Activated CD4-positive, alpha-beta T cell treated with anti-CD3 and anti-CD28 coated beads, Interleukin-2, amount 10 ng/mL, durations not matched to agents 7 days and 5 days (primary cell): ENCODE measurements at regions of chr4 and their contacts with region 1.

Region 1: DNA sequence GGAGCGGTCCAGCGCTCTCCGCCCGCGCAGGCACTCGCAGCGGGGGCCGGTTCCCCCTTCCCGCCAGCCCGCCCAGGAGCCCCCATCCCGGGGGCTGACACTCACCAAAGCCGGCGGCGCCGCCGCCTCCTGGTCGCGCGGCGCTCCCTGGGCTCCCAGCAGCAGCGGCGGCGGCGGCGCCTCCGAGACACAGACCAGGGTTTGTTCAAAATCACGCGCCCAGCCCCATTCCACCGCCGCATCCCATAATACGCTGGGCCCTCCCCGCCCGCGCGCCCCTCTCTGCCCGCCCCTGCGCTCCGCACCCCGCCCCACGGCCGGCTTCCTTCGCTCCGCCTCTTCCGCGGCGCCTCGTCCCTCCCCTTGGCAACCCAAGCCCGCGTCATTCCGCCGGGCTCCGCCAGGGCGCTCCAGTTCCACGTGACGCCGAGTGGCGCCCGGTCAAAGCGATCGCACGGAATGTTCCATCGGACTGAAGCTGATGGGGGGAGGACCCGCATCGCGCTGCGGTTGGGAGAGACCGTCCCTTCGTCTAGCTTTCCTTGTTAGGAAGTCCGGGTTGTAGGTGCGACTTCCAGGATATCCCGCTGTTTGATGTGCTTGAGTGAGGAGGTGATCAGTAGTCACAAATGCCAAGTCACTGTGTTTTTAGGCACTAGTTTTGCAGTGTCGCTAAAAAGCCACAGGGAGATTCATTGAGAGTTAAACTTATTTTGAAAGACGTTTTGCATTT is 2.2 kb upstream of the LIN54 start:
- DNase-seq: peak; percentile 96
- H3K4me3 Mint-ChIP-seq: peak overlapping the region; percentile 89
- H3K27ac Mint-ChIP-seq: peak overlapping the region; percentile 96
- H3K4me1 Mint-ChIP-seq: peaks cover 35% of the 10 kb centered on the region
- H3K27me3 Mint-ChIP-seq: no peaks in the 10 kb centered on the region

Region 2: DNA sequence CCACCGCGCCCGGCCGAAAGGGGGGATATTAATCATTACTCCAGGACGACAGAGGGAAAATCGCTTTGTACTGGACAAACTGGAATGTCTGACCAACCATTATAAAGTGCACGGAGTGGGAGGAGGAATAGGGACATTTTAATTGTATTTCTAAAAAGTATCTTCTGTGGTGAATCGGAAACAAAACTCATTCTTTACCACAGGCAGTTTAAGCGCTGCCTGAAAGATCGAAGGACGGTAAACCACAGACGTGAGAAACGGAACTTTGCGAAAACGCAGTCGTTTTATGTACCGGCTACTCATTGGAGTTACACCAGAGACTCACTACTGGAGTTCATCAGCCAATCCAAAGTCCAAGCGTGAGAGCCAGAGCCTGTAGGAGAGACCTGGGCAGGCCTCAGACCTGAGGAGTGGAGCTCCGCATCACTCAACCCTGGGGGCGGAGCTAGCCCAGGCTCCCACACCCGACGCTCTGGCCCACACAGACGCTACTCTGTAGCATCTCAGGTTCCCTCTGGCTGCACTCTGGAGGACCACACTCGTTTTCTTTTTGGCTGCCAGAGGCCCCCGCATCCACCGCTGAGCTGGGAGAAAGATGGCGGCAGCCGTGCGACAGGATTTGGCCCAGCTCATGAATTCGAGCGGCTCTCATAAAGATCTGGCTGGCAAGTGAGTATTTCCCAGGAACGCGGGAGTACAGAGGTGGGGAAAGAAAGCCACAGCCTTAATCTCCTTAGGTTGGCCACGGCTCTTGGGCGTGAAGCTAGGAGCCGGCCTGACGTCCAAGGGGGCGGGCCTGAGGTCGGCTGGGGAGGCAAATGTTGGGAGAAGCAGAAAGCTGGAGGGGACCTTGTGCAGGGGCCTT is 22.0 kb after region 1 on chr4 and contains the start of gene COPS4:
- CTCF ChIA-PET with region 1: interaction called, 21 read pairs
- POLR2A ChIA-PET with region 1: interaction called, 9 read pairs
- DNase-seq: peak; percentile 98
- H3K4me3 Mint-ChIP-seq: peak within 1 kb of the TSS; percentile 93
- H3K27ac Mint-ChIP-seq: peak within 1 kb of the TSS; percentile 95
- H3K4me1 Mint-ChIP-seq: peaks cover 32% of the 10 kb centered on the region
- H3K27me3 Mint-ChIP-seq: peaks cover 4% of the 10 kb centered on the region
- total RNA-seq, gene COPS4: 28.0 to 29.3 TPM

Region 3: DNA sequence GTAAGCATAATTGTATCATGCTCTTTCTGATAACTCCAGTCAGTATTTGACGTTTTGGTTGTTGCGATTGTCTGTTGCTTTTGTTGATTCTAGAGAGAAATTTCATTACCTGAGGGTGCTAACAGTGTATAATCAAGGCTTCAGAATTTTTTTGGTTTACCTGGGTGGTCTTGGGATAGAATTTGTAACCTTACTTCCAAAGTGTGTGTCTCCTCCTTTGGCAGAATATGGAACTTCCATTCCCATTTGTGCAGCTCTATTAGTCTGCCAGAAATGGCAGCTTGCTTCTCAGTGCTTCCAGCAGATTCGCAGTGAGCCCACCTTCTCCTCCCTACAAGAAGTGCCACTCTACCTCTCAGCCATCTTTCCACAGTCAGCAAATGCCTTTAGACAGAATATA is 27.4 kb after region 1 on chr4:
- CTCF ChIA-PET with region 1: interaction called, 21 read pairs
- POLR2A ChIA-PET with region 1: interaction called, 9 read pairs
- DNase-seq: no peak
- H3K4me3 Mint-ChIP-seq: no peak overlapping the region
- H3K27ac Mint-ChIP-seq: no peak overlapping the region
- H3K4me1 Mint-ChIP-seq: peaks cover 43% of the 10 kb centered on the region
- H3K27me3 Mint-ChIP-seq: no peaks in the 10 kb centered on the region